ENCODE measurements at regions of chr11 and their contacts with region 1.

Region 1: GRCh38 chr11:34519595-34520235 is 6.1 kb upstream of the ELF5 start:
- DNase-seq: no peak
- H3K4me3 ChIP-seq: no peak overlapping the region
- H3K27ac ChIP-seq: no peak overlapping the region
- H3K4me1 ChIP-seq: no peaks in the 10 kb centered on the region
- H3K27me3 ChIP-seq: no peaks in the 10 kb centered on the region
- CTCF ChIP-seq: no peak

Region 2: GRCh38 chr11:34468209-34468841 is 51.4 kb before region 1 on chr11:
- CTCF ChIA-PET with region 1: no interaction called
- dilution Hi-C with region 1: no loop called
- in situ Hi-C with region 1: no loop called
- intact Hi-C with region 1: no loop called
- DNase-seq: peak; percentile 19
- H3K4me3 ChIP-seq: no peak overlapping the region
- H3K27ac ChIP-seq: no peak overlapping the region
- H3K4me1 ChIP-seq: no peaks in the 10 kb centered on the region
- H3K27me3 ChIP-seq: no peaks in the 10 kb centered on the region
- CTCF ChIP-seq: peak; percentile 85 to 91

Region 3: DNA sequence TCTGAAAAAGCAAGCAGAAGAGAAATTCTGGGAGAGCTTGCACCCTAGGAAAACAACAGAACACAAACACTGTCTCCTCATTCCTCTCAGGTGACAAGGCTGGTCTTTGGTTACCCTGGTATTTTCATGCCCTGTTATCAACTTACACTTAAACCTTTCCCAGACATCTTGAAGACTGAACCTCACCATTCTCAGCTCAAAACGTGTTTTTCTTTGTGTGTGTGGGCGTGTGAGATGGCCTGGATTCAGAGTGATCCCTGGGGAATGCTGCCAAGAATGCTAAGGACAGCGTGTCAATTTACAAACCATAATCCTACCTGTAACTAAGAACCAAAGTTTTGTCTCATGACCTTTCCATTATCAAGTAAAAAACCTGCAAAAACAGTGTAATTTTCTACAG is 39.4 kb before region 1 on chr11:
- CTCF ChIA-PET with region 1: no interaction called
- dilution Hi-C with region 1: loop called (anchors 5 kb)
- in situ Hi-C with region 1: no loop called
- intact Hi-C with region 1: no loop called
- DNase-seq: peak; percentile 36
- H3K4me3 ChIP-seq: no peak overlapping the region
- H3K27ac ChIP-seq: no peak overlapping the region
- H3K4me1 ChIP-seq: peaks cover 9% of the 10 kb centered on the region
- H3K27me3 ChIP-seq: no peaks in the 10 kb centered on the region
- CTCF ChIP-seq: no peak

Region 4: GRCh38 chr11:34585735-34586487 is 66.2 kb after region 1 on chr11:
- CTCF ChIA-PET with region 1: no interaction called
- dilution Hi-C with region 1: no loop called
- in situ Hi-C with region 1: no loop called
- intact Hi-C with region 1: no loop called
- DNase-seq: peak; percentile 55
- H3K4me3 ChIP-seq: no peak overlapping the region
- H3K27ac ChIP-seq: no peak overlapping the region
- H3K4me1 ChIP-seq: no peaks in the 10 kb centered on the region
- H3K27me3 ChIP-seq: no peaks in the 10 kb centered on the region
- CTCF ChIP-seq: peak; percentile 52 to 70

Measured in mammary epithelial cell (primary cell).